ENCODE measurements at regions of chr1 and their contacts with region 1.

Region 1: GRCh38 chr1:109984456-109985275 is at the start of gene AHCYL1:
- DNase-seq: peak; percentile 97
- H3K4me3 ChIP-seq: peak within 1 kb of the TSS; percentile 78 to 84 (median 83)
- H3K27ac ChIP-seq: peak within 1 kb of the TSS; percentile 63
- H3K4me1 ChIP-seq: peaks cover 36% of the 10 kb centered on the region
- H3K27me3 ChIP-seq: no peaks in the 10 kb centered on the region
- CTCF ChIP-seq: peak; percentile 92 to 99
- total RNA-seq, gene AHCYL1: 71.2 to 72.2 TPM

Region 2: GRCh38 chr1:109493805-109494539 is 490.7 kb before region 1 on chr1 and contains the start of gene CYB561D1:
- CTCF ChIA-PET with region 1: no interaction called
- dilution Hi-C with region 1: no loop called
- in situ Hi-C with region 1: no loop called
- intact Hi-C with region 1: no loop called
- DNase-seq: peak; percentile 80
- H3K4me3 ChIP-seq: peak within 1 kb of the TSS; percentile 93 to 98 (median 94)
- H3K27ac ChIP-seq: no peak within 1 kb of the TSS
- H3K4me1 ChIP-seq: peaks cover 4% of the 10 kb centered on the region
- H3K27me3 ChIP-seq: no peaks in the 10 kb centered on the region
- CTCF ChIP-seq: peak; percentile 58 to 95
- total RNA-seq, gene CYB561D1: 7.3 to 7.7 TPM

Region 3: DNA sequence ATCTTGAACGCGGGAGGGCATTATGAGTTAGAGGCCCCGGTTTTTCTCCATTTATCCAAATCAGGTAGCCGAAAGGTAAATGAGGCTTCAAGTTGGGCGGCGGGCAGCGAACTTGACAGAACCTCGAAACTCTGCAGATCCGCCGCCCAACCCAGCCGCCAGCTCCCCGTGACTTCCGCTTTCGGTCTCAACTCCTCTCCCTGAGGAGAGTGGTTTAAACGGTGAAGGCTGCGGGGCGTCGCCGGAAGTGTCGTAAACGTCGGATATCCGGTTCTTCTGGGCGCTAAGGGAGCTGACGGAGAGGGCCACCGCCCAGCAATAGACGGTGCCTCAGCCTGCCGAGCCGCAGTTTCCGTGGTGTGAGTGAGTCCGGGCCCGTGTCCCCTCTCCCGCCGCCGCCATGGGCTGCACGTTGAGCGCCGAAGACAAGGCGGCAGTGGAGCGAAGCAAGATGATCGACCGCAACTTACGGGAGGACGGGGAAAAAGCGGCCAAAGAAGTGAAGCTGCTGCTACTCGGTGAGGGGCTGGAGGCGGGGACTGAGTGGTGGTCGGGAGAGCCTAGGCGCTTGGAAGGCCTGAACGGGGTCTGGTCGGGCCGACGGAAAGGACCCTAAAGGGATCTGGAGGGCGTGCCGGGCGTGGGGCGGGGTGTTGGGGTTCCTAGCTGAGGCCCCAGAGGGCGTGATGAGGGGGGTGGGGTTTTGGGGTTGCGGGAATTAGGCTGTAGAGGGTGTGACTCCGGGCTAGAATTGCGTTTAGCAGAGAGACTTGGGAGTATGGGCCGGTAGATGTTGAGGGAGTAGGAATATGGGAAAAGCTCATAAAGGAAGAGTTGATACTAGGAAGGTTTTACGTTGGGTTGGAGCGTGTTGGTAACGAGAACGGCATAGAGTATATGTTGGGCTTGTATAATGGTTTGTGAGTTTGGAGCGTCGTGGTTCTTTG is 436.1 kb before region 1 on chr1 and contains the start of gene GNAI3:
- CTCF ChIA-PET with region 1: interaction called, 5 read pairs
- dilution Hi-C with region 1: no loop called
- in situ Hi-C with region 1: loop called (anchors 10 kb)
- intact Hi-C with region 1: loop called (anchors 1 kb)
- DNase-seq: peak; percentile 96
- H3K4me3 ChIP-seq: peak within 1 kb of the TSS; percentile 83 to 96 (median 89)
- H3K27ac ChIP-seq: peak within 1 kb of the TSS; percentile 98
- H3K4me1 ChIP-seq: peaks cover 9% of the 10 kb centered on the region
- H3K27me3 ChIP-seq: no peaks in the 10 kb centered on the region
- CTCF ChIP-seq: no peak
- total RNA-seq, gene GNAI3: 12.0 to 15.5 TPM

Region 4: GRCh38 chr1:109650609-109651008 is 334.1 kb before region 1 on chr1:
- CTCF ChIA-PET with region 1: interaction called, 16 read pairs
- dilution Hi-C with region 1: no loop called
- in situ Hi-C with region 1: loop called (anchors 5 to 25 kb)
- intact Hi-C with region 1: no loop called
- DNase-seq: no peak
- H3K4me3 ChIP-seq: no peak overlapping the region
- H3K27ac ChIP-seq: no peak overlapping the region
- H3K4me1 ChIP-seq: peaks cover 2% of the 10 kb centered on the region
- H3K27me3 ChIP-seq: peaks cover 5% of the 10 kb centered on the region
- CTCF ChIP-seq: no peak

Region 5: DNA sequence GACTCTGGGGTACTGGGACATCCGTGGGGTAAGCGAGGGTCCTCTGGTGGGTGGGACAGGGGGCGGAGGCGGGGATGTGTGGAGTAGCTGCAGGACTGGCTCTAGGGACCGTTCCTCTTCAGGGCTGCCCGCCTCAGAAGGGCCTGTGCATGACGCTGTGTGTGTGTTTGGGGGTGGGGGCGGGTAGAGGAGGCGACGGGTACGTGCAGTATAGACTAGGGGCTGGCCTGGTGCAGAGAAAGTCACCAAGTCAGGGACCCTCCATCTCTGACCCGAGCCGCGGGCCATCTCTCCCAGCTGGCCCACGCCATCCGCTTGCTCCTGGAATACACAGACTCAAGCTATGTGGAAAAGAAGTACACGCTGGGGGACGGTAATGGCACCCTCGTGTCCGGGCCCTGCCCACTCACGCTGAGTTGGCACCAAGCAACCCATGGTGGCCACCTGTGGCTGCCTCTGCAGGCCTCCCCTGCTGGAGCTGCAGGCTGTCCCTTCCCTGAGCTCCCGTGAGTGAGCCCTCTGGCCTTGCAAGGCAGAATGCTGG is 272.3 kb before region 1 on chr1:
- CTCF ChIA-PET with region 1: no interaction called
- dilution Hi-C with region 1: no loop called
- in situ Hi-C with region 1: no loop called
- intact Hi-C with region 1: no loop called
- DNase-seq: no peak
- H3K4me3 ChIP-seq: no peak overlapping the region
- H3K27ac ChIP-seq: no peak overlapping the region
- H3K4me1 ChIP-seq: peaks cover 2% of the 10 kb centered on the region
- H3K27me3 ChIP-seq: no peaks in the 10 kb centered on the region
- CTCF ChIP-seq: no peak

Region 6: DNA sequence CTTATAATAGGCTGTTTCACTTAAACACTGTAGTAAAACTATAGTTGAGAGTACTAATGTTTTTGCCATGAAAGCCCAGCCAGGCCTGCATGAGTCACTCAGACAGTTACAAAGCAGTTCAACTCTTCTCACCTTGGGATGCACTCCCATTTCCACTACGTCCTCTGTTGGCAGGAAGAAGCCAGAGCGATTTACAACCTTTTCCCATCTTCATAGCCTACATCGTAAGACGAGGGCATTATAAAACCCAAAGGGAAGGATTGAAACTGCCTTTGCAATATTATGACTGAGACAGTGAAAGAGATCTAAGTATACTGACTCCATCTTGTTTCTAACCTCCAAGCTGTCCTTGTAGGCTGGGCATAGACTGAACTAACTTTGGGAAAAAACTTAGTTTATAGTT is 145.8 kb before region 1 on chr1:
- CTCF ChIA-PET with region 1: no interaction called
- dilution Hi-C with region 1: no loop called
- in situ Hi-C with region 1: no loop called
- intact Hi-C with region 1: loop called (anchors 5 kb)
- DNase-seq: peak; percentile 57
- H3K4me3 ChIP-seq: no peak overlapping the region
- H3K27ac ChIP-seq: no peak overlapping the region
- H3K4me1 ChIP-seq: peaks cover 16% of the 10 kb centered on the region
- H3K27me3 ChIP-seq: no peaks in the 10 kb centered on the region
- CTCF ChIP-seq: peak; percentile 1 to 15

Region 7: DNA sequence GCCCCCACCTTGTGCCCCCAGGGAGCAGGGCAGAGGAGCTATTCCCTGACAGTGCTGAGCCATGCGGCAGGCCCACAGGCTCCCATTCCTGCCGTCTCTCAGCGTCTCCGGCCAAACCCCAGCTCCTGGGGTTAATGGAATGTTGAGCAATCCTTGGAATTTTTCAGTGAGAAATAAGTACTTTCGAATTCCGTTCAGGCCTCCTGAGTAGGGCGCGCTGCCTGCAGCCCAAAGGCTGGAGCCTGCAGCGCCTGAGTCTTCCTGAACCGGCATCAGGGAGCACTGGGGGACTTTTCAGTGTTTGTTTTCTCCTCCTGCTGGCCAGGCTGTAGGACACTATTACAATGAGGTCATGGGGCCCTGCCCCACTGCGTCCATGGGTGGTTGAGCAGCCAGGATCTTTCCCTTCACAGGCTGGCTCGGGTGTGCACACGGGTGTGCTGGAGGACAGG is 107.3 kb before region 1 on chr1:
- CTCF ChIA-PET with region 1: no interaction called
- dilution Hi-C with region 1: no loop called
- in situ Hi-C with region 1: no loop called
- intact Hi-C with region 1: loop called (anchors 5 kb)
- DNase-seq: peak; percentile 69
- H3K4me3 ChIP-seq: no peak overlapping the region
- H3K27ac ChIP-seq: peak overlapping the region; percentile 19
- H3K4me1 ChIP-seq: peaks cover 40% of the 10 kb centered on the region
- H3K27me3 ChIP-seq: no peaks in the 10 kb centered on the region
- CTCF ChIP-seq: no peak

Region 8: DNA sequence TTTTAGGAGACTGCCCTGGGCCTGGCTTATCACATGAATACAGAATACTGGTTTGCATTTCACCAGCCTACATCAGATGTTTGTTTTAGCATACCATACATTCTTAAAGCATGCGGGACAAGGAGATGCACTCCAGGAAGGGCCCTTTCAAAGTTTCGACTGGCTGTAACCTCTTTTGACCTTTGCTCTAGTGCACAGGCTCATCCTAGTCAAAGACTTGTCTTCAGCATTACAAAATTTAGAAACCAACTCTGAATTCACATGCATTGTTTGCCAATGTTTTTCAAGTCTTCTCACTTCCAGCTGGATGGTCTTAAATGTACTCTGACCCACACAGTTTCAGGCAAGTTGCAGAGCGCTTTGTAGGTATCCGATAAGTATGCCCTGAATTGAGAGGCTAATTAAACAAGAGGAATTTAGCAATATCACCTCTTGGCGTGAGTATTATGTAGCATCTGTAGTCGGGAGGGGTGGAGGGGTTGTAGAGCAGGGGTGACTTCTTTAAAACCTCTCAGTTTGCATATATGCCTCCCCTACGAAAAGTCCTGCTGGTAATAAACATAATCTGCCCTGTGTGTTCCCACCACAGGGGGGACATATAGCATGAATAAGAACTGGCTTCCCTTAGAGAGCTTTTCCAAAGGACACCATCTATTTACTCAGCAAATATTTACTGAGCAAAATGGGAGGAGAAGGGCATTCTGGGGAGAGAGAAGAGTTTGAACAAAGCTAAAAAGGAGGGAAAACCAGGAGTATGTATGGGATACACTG is 24.5 kb before region 1 on chr1:
- CTCF ChIA-PET with region 1: no interaction called
- dilution Hi-C with region 1: no loop called
- in situ Hi-C with region 1: no loop called
- intact Hi-C with region 1: loop called (anchors 2 kb)
- DNase-seq: peak; percentile 14
- H3K4me3 ChIP-seq: no peak overlapping the region
- H3K27ac ChIP-seq: no peak overlapping the region
- H3K4me1 ChIP-seq: peaks cover 22% of the 10 kb centered on the region
- H3K27me3 ChIP-seq: no peaks in the 10 kb centered on the region
- CTCF ChIP-seq: no peak

Measured in mammary epithelial cell (primary cell).